ENCODE measurements at regions of chr14 and their contacts with region 1.

Region 1: GRCh38 chr14:22918804-22919600 is at the start of gene RBM23:
- DNase-seq: peak; percentile 98 to 100 (median 100)
- ATAC-seq: peak; percentile 89 to 95 (median 94)
- H3K4me3 ChIP-seq: peak within 1 kb of the TSS; percentile 96 to 99
- H3K4me3 Mint-ChIP-seq: peak within 1 kb of the TSS; percentile 95 to 97 (median 96)
- H3K27ac ChIP-seq: peak within 1 kb of the TSS; percentile 99
- H3K27ac Mint-ChIP-seq: peak within 1 kb of the TSS; percentile 100
- H3K4me1 ChIP-seq: peaks cover 6 to 28% of the 10 kb centered on the region in 2 experiments
- H3K4me1 Mint-ChIP-seq: peaks cover 46 to 50% (median 48%) of the 10 kb centered on the region in 3 donors
- H3K27me3 ChIP-seq: no peaks in the 10 kb centered on the region
- H3K27me3 Mint-ChIP-seq: peaks cover 0 to 4% of the 10 kb centered on the region in 2 donors
- total RNA-seq, gene RBM23: 88.7 to 102 (median 94.7) TPM

Region 2: GRCh38 chr14:22333422-22334276 is 585.4 kb before region 1 on chr14:
- CTCF ChIA-PET with region 1: no interaction called
- POLR2A ChIA-PET with region 1: no interaction called
- DNase-seq: no peak
- ATAC-seq: no peak
- H3K4me3 ChIP-seq: no peak overlapping the region
- H3K4me3 Mint-ChIP-seq: no peak overlapping the region
- H3K27ac ChIP-seq: no peak overlapping the region
- H3K27ac Mint-ChIP-seq: no peak overlapping the region
- H3K4me1 ChIP-seq: no peaks in the 10 kb centered on the region
- H3K4me1 Mint-ChIP-seq: no peaks in the 10 kb centered on the region
- H3K27me3 ChIP-seq: no peaks in the 10 kb centered on the region
- H3K27me3 Mint-ChIP-seq: no peaks in the 10 kb centered on the region

Region 3: DNA sequence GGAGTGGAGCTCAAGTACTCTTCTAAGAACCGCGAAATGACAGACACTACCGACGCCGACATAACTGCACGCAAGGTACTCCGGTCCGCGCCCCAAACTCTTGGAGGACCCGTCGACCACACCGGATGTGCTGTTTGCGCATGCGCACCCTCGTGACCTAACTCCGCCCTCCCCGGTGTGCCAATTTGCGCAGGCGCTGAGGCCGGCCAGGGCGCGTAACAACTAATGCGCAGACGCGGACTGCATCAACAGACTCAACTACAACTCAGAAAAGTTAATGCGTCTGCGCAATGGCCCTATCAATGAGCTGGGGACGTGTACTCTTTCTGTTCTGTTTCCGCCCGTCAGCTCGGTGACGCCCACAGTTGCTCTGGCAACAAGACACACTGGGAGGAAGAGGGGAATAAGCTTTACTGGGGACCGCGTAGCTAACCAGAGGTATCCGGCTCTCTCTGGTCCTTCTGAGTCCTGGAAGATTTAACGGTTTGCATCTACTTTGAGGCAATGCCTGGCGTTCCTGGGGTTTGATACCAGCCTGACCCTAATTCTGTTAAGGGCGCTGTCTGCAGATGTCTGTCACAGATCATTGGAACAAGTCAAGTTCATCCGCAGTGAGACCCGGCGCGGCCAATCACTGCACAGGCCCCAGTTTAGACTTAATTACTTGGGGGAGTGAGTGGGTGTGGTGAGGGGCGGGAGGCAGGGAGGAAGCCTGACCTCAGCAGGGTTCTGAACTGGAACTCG is 329.7 kb before region 1 on chr14 and contains the start of gene DAD1:
- CTCF ChIA-PET with region 1: interaction called in 1 of 2 experiments, 8 read pairs
- POLR2A ChIA-PET with region 1: interaction called in 1 of 2 experiments, 18 read pairs
- DNase-seq: peak; percentile 97 to 100 (median 99)
- ATAC-seq: peak; percentile 93
- H3K4me3 ChIP-seq: peak within 1 kb of the TSS; percentile 88 to 90
- H3K4me3 Mint-ChIP-seq: peak within 1 kb of the TSS; percentile 93 to 99 (median 97)
- H3K27ac ChIP-seq: peak within 1 kb of the TSS; percentile 98
- H3K27ac Mint-ChIP-seq: peak within 1 kb of the TSS; percentile 99 to 100
- H3K4me1 ChIP-seq: peaks cover 25 to 34% of the 10 kb centered on the region in 2 experiments
- H3K4me1 Mint-ChIP-seq: peaks cover 59 to 62% (median 61%) of the 10 kb centered on the region in 3 donors
- H3K27me3 ChIP-seq: peaks cover 0 to 2% of the 10 kb centered on the region in 2 experiments
- H3K27me3 Mint-ChIP-seq: peaks cover 0 to 5% of the 10 kb centered on the region in 2 donors
- total RNA-seq, gene DAD1: 80.9 to 127 (median 113) TPM

Region 4: GRCh38 chr14:22766456-22767322 is 152.3 kb before region 1 on chr14 and contains the start of gene OXA1L:
- CTCF ChIA-PET with region 1: no interaction called
- POLR2A ChIA-PET with region 1: interaction called in 1 of 2 experiments, 12 read pairs
- DNase-seq: peak; percentile 89 to 99 (median 96)
- ATAC-seq: peak; percentile 90 to 95 (median 94)
- H3K4me3 ChIP-seq: peak within 1 kb of the TSS; percentile 92 to 100
- H3K4me3 Mint-ChIP-seq: peak within 1 kb of the TSS; percentile 85 to 91 (median 88)
- H3K27ac ChIP-seq: peak within 1 kb of the TSS; percentile 87
- H3K27ac Mint-ChIP-seq: peak within 1 kb of the TSS; percentile 93 to 98
- H3K4me1 ChIP-seq: peaks cover 16 to 18% of the 10 kb centered on the region in 2 experiments
- H3K4me1 Mint-ChIP-seq: peaks cover 33 to 41% (median 35%) of the 10 kb centered on the region in 3 donors
- H3K27me3 ChIP-seq: no peaks in the 10 kb centered on the region
- H3K27me3 Mint-ChIP-seq: no peaks in the 10 kb centered on the region
- total RNA-seq, gene OXA1L: 130 to 152 (median 136) TPM

Region 5: DNA sequence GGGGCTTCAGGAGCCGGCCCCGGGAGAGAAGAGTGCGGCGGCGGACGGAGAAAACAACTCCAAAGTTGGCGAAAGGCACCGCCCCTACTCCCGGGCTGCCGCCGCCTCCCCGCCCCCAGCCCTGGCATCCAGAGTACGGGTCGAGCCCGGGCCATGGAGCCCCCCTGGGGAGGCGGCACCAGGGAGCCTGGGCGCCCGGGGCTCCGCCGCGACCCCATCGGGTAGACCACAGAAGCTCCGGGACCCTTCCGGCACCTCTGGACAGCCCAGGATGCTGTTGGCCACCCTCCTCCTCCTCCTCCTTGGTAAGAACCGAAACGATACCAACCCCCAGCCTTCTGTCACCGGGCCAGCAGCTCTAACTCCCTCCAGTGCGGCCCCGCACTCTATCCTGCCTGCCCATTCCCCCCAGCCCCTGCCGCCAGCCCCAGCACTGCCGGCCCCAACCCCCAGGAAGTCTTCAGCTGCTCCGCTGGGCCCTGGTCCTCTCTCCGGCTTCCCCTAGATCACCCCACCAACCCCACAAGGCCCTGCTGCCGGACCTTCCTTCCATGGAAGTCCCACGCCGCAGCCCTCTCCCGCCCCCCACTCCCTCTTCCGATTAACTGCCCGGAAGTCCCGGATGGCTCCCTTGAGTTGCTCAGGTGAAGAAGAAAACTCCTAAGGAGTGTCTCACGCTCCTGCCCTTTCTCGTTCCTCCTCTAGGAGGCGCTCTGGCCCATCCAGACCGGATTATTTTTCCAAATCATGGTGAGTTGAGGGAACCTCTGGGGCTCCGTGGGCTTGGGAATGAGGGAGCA is 46.8 kb before region 1 on chr14:
- CTCF ChIA-PET with region 1: interaction called, 3 to 5 read pairs
- POLR2A ChIA-PET with region 1: interaction called, 3 to 10 read pairs
- DNase-seq: peak in 34 of 35 experiments; percentile 29 to 84 (median 57)
- ATAC-seq: peak; percentile 30 to 55 (median 44)
- H3K4me3 ChIP-seq: peak overlapping the region; percentile 78 to 80
- H3K4me3 Mint-ChIP-seq: peak overlapping the region; percentile 86 to 92 (median 91)
- H3K27ac ChIP-seq: peak overlapping the region; percentile 91
- H3K27ac Mint-ChIP-seq: peak overlapping the region; percentile 97 to 98
- H3K4me1 ChIP-seq: peaks cover 12 to 56% of the 10 kb centered on the region in 2 experiments
- H3K4me1 Mint-ChIP-seq: peaks cover 29 to 45% (median 45%) of the 10 kb centered on the region in 3 donors
- H3K27me3 ChIP-seq: no peaks in the 10 kb centered on the region
- H3K27me3 Mint-ChIP-seq: no peaks in the 10 kb centered on the region

Region 6: GRCh38 chr14:22905627-22906026 is 13.4 kb before region 1 on chr14:
- CTCF ChIA-PET with region 1: interaction called, 5 read pairs
- POLR2A ChIA-PET with region 1: interaction called, 7 to 10 read pairs
- DNase-seq: no peak
- ATAC-seq: no peak
- H3K4me3 ChIP-seq: no peak overlapping the region
- H3K4me3 Mint-ChIP-seq: no peak overlapping the region
- H3K27ac ChIP-seq: no peak overlapping the region
- H3K27ac Mint-ChIP-seq: peak overlapping the region in 1 of 2 donors; percentile 18
- H3K4me1 ChIP-seq: peaks cover 2 to 6% of the 10 kb centered on the region in 2 experiments
- H3K4me1 Mint-ChIP-seq: peaks cover 8 to 11% (median 10%) of the 10 kb centered on the region in 3 donors
- H3K27me3 ChIP-seq: no peaks in the 10 kb centered on the region
- H3K27me3 Mint-ChIP-seq: no peaks in the 10 kb centered on the region

Region 7: GRCh38 chr14:22929104-22929847 is 10.3 kb after region 1 on chr14 and contains the start of gene PRMT5:
- CTCF ChIA-PET with region 1: interaction called, 3 to 50 read pairs
- POLR2A ChIA-PET with region 1: interaction called, 4 to 48 read pairs
- DNase-seq: peak; percentile 93 to 100 (median 98)
- ATAC-seq: peak; percentile 95 to 97 (median 97)
- H3K4me3 ChIP-seq: peak within 1 kb of the TSS; percentile 97 to 99
- H3K4me3 Mint-ChIP-seq: no peak within 1 kb of the TSS
- H3K27ac ChIP-seq: peak within 1 kb of the TSS; percentile 89
- H3K27ac Mint-ChIP-seq: no peak within 1 kb of the TSS
- H3K4me1 ChIP-seq: peaks cover 9 to 20% of the 10 kb centered on the region in 2 experiments
- H3K4me1 Mint-ChIP-seq: peaks cover 5 to 19% (median 11%) of the 10 kb centered on the region in 3 donors
- H3K27me3 ChIP-seq: no peaks in the 10 kb centered on the region
- H3K27me3 Mint-ChIP-seq: no peaks in the 10 kb centered on the region
- total RNA-seq, gene PRMT5: 17.7 to 45.3 (median 37.5) TPM

Measured in T-cell (primary cell).